Psoas muscle (tissue), 8 donors: ENCODE measurements at regions of chr11 and their contacts with region 1.

Region 1: DNA sequence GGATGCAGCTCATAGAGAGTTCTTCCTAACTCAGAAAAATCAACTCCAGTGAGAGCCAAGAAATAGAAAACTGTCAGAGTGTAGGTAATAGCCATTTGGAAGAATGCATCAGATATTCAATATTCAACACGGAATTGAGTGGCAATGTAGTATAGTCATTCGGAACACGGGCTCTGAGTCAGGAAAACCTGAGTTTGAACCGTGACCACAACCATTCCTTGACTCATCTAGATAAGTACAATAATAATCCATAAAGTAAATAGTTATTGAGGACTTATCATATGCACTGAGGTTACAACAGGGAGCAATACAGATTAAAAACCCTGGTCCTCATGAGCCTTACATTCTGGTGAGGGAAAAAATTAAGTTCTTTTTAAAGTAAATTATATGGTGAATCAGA is 62.6 kb upstream of the PHF21A start:
- DNase-seq: no peak
- ATAC-seq: no peak
- H3K4me3 ChIP-seq: no peak overlapping the region
- H3K27ac ChIP-seq: no peak overlapping the region
- H3K4me1 ChIP-seq: no peaks in the 10 kb centered on the region
- H3K27me3 ChIP-seq: peaks cover 0 to 13% (median 0%) of the 10 kb centered on the region in 3 donors
- CTCF ChIP-seq: no peak

Region 2: DNA sequence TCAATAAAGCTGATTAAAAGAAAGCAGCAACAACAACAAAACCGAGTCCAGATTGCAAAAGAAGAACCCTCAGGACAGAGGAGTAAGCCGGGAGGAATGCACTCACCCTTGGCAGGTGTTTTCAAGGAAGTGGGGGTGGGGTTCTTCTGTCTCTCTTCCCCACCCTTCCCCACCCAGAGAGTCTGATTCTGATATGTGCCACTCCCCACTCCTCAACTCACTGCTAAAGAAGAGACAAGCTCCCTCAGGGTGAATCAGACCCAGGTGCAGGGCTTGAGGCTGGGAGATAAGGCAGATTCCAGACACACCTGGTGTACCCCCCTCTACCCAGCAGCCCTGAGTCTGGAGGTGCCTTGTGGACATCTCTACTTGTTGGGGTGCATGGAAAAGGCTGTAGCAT is 24.1 kb before region 1 on chr11:
- intact Hi-C with region 1: loop called in 1 of 2 experiments (anchors 2 kb)
- DNase-seq: no peak
- ATAC-seq: no peak
- H3K4me3 ChIP-seq: no peak overlapping the region
- H3K27ac ChIP-seq: no peak overlapping the region
- H3K4me1 ChIP-seq: no peaks in the 10 kb centered on the region
- H3K27me3 ChIP-seq: peaks cover 0 to 35% (median 7%) of the 10 kb centered on the region in 3 donors
- CTCF ChIP-seq: no peak

Region 3: GRCh38 chr11:46346886-46347636 is 163.2 kb after region 1 on chr11 and contains the start of gene DGKZ:
- intact Hi-C with region 1: no loop called
- DNase-seq: peak; percentile 87 to 94
- ATAC-seq: peak; percentile 83 to 91 (median 89)
- H3K4me3 ChIP-seq: peak within 1 kb of the TSS; percentile 74
- H3K27ac ChIP-seq: peak within 1 kb of the TSS; percentile 74
- H3K4me1 ChIP-seq: peaks cover 23% of the 10 kb centered on the region
- H3K27me3 ChIP-seq: no peaks in the 10 kb centered on the region
- CTCF ChIP-seq: peak; percentile 98
- total RNA-seq, gene DGKZ: 90.2 to 138 (median 96.2) TPM